Endothelial cell of umbilical vein (primary cell): ENCODE measurements at regions of chrX and their contacts with region 1.

Region 1: DNA sequence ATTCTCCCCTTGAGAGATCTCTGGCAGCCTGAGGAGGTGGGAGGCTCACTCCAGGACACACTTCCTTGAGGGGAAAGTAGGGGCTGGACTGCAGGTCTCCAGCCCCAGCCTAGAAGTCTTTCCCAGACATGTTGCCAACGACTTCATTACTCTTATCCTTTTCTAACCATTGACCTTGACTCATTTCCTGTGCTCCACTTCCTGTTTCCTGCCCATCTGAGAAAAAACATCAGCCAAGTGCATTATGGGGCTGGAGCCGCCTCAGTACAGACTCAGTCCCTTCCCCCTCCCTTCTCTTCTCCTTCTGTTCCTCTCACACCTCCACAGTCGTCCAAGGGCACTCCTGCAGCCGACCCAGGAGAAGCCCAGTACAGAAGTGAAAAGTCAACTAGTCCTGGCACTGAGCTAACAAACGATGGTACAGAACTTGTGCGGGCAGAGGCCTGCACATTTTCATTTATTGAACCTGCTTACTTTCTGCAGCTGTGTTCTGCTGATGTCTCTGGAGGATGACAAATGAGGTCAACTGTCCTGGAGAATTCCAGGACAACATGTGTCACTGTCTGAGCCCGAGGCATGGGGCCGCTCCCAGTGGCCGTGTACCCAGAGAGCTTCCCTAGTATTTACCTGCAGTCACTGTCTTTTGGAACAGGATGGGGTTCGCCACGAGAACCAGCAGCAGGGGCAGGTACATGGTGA is 20.1 kb downstream of the GPR143 start:
- DNase-seq: peak; percentile 95
- H3K4me3 ChIP-seq: peak overlapping the region in 2 of 3 experiments; percentile 9 to 13
- H3K27ac ChIP-seq: peak overlapping the region; percentile 99
- H3K4me1 ChIP-seq: peaks cover 32% of the 10 kb centered on the region
- H3K27me3 ChIP-seq: no peaks in the 10 kb centered on the region
- CTCF ChIP-seq: no peak
- POLR2A ChIP-seq: peak; percentile 20

Region 2: DNA sequence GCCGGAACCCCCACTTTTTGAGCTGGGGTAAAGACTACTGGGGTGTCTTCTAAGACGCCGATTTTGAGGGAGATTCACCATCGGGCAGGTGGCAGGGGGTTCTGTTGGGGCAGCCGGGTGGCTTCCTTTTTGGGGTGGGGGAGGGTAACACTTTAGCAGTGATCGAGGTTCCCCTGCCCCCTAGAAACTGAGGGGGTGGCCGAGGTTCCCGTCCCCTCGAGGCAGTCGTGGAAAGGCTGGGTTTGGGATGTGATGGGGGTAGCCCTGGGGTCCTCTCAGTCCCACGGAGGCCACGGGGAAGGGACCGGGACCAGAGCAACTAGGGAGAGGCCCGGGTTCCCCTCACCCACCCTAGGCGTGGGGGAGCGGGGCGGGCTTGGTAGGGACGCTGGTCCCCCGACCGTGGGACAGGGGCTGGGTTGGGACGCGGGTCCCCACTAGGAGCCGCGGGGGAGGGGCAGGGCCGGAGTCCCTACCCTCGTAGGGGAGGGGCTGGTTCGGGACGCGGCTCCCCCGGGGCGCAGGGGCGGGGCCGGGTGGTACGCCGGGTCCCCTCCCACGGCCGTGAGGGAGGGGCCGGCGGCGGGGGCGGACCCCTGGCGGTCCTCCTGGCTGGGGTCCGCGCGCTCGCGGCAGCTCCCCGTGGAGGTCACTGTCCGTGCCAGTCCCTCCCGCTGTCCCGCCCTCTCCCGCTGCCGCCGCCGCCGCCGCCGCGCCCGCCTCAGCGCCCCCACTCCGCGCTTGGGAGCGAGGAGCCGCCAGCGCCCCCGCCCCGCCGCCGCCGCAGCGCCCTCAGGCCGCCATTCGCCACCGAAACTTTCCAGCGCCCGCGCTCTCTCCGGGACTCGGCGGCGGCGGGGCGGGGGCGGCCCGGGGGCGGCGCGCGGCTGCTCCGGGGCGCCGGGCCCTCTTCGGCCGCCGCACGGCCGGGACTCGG is 280.9 kb before region 1 on chrX and contains the start of gene TBL1X:
- CTCF ChIA-PET with region 1: no interaction called
- POLR2A ChIA-PET with region 1: no interaction called
- dilution Hi-C with region 1: no loop called
- intact Hi-C with region 1: loop called (anchors 1 kb)
- DNase-seq: peak; percentile 32
- H3K4me3 ChIP-seq: peak within 1 kb of the TSS; percentile 59 to 79 (median 68)
- H3K27ac ChIP-seq: peak within 1 kb of the TSS; percentile 53
- H3K4me1 ChIP-seq: peaks cover 15% of the 10 kb centered on the region
- H3K27me3 ChIP-seq: no peaks in the 10 kb centered on the region
- CTCF ChIP-seq: no peak
- POLR2A ChIP-seq: no peak
- total RNA-seq, gene TBL1X: 22.1 and 25.3 TPM in 2 replicates

Region 3: GRCh38 chrX:9708904-9709553 is 36.5 kb before region 1 on chrX:
- CTCF ChIA-PET with region 1: no interaction called
- POLR2A ChIA-PET with region 1: interaction called, 16 read pairs
- dilution Hi-C with region 1: no loop called
- intact Hi-C with region 1: no loop called
- DNase-seq: peak; percentile 67
- H3K4me3 ChIP-seq: no peak overlapping the region
- H3K27ac ChIP-seq: no peak overlapping the region
- H3K4me1 ChIP-seq: no peaks in the 10 kb centered on the region
- H3K27me3 ChIP-seq: no peaks in the 10 kb centered on the region
- CTCF ChIP-seq: peak; percentile 48 to 79
- POLR2A ChIP-seq: no peak

Region 4: DNA sequence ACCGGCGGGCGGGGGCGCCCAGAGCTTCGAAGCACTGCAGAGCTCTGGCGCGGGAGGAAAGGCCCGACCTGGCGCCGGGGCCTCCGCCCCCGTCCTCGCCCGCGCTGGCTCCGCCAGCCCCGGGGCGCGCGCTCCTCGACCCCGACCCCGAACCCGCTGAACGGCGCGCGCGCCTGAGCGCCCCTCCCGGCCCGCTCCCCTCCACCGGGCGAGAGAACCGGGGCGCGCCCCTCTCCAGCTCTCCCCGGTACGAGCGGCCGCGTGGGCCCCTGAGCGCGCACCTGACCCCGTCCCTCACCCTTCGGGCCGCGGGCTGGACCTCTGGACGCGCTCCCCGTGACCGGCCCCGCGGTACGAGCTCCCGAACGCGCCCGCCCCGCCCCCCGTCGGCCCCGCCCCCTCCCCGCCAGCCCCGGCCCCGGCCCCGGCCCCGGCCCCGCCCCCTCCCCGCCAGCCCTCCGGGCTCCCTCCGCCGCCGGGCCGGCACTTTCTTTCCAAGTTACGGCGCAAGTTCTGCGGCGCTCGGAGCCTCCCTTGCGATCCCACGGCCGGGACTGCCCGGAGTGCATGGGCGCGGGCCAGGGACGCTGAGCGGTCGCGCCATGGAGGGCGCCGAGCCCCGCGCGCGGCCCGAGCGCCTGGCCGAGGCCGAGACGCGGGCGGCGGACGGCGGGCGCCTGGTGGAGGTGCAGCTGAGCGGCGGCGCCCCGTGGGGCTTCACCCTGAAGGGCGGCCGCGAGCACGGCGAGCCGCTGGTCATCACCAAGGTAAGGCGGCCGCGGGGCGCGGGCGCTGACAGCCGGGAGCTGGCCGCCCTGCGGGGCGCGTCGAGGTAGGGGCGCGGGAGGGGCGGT is 40.6 kb after region 1 on chrX and contains the start of gene SHROOM2:
- CTCF ChIA-PET with region 1: interaction called, 7 read pairs
- POLR2A ChIA-PET with region 1: interaction called, 4 read pairs
- dilution Hi-C with region 1: no loop called
- intact Hi-C with region 1: loop called (anchors 1 kb)
- DNase-seq: no peak
- H3K4me3 ChIP-seq: peak within 1 kb of the TSS; percentile 18 to 83 (median 73)
- H3K27ac ChIP-seq: peak within 1 kb of the TSS; percentile 35
- H3K4me1 ChIP-seq: peaks cover 9% of the 10 kb centered on the region
- H3K27me3 ChIP-seq: no peaks in the 10 kb centered on the region
- CTCF ChIP-seq: no peak
- POLR2A ChIP-seq: no peak
- total RNA-seq, gene SHROOM2: 10.4 and 11.8 TPM in 2 replicates

Region 5: DNA sequence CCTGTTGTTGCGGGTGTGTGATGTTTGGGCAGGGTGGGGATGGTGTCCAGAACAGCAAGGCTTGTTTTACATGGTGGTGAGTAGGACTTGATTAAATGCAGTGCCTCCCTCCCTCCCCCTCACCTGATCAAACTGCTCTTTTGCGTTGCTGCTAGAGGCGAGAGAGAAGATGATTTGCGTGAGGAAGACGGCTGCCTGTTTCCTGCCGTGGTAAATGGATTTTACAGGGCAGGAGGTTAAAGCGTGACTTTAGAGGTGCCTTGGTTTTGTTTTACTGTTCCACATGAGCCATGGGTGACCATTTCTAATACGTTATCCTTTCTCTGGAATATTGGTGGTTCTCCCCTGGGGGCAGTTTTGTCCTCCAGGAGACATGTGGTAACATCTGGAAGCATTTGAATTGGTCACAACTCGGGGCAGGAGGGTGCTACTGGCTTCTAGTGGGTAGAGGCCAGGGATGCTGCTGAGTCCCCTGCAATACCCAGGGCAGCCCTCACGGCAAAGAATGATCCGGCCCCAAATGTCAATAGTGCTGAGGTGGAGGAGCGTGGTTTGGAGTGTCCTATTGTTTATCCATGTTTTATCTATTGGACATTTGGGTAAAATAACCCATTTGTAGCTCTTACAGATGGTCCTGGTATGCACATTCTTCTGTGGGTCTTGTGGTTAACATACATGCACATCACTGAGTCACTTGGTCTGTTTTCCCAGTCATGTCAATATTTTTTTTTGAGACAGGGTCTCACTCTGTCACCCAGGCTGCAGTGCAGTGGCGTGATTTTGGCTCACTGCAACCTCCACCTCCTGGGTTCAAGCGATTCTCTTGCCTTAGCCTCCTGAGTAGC is 114.4 kb after region 1 on chrX:
- CTCF ChIA-PET with region 1: no interaction called
- POLR2A ChIA-PET with region 1: no interaction called
- dilution Hi-C with region 1: no loop called
- intact Hi-C with region 1: loop called (anchors 5 kb)
- DNase-seq: no peak
- H3K4me3 ChIP-seq: no peak overlapping the region
- H3K27ac ChIP-seq: no peak overlapping the region
- H3K4me1 ChIP-seq: peaks cover 21% of the 10 kb centered on the region
- H3K27me3 ChIP-seq: no peaks in the 10 kb centered on the region
- CTCF ChIP-seq: no peak
- POLR2A ChIP-seq: no peak

Region 6: DNA sequence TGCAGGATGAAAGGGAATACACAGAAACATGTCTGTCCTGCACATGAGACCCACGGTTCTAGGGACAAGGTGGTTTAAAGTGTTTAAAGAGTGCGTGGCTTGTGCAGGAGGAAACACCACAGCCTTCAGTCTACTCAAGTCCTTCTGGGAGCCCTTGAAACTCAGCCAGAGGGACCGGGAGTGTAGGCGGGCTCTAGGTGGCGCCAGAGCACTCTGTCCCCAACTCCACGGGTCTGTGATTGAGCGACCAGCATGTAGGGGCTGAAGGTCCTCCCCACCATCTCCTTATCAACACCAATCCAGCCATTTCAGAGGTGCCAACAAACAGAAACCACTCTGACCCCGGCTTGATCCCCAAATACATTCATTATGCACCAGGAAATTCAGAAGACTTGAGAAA is 139.6 kb after region 1 on chrX:
- CTCF ChIA-PET with region 1: no interaction called
- POLR2A ChIA-PET with region 1: no interaction called
- dilution Hi-C with region 1: no loop called
- intact Hi-C with region 1: loop called (anchors 1 kb)
- DNase-seq: peak; percentile 85
- H3K4me3 ChIP-seq: no peak overlapping the region
- H3K27ac ChIP-seq: no peak overlapping the region
- H3K4me1 ChIP-seq: peaks cover 41% of the 10 kb centered on the region
- H3K27me3 ChIP-seq: no peaks in the 10 kb centered on the region
- CTCF ChIP-seq: peak; percentile 56 to 76
- POLR2A ChIP-seq: no peak

Region 7: GRCh38 chrX:10014462-10015356 is 269.1 kb after region 1 on chrX:
- CTCF ChIA-PET with region 1: no interaction called
- POLR2A ChIA-PET with region 1: no interaction called
- dilution Hi-C with region 1: no loop called
- intact Hi-C with region 1: loop called (anchors 2 kb)
- DNase-seq: peak; percentile 87
- H3K4me3 ChIP-seq: peak overlapping the region in 2 of 3 experiments; percentile 31 to 83
- H3K27ac ChIP-seq: peak overlapping the region; percentile 88
- H3K4me1 ChIP-seq: peaks cover 51% of the 10 kb centered on the region
- H3K27me3 ChIP-seq: no peaks in the 10 kb centered on the region
- CTCF ChIP-seq: no peak
- POLR2A ChIP-seq: no peak